ENCODE measurements at regions of chr10 and their contacts with region 1.

Region 1: GRCh38 chr10:99430451-99431189 is at the start of gene GOT1:
- DNase-seq: peak; percentile 96
- ATAC-seq: peak; percentile 95
- total RNA-seq, gene GOT1: 587 TPM

Region 2: DNA sequence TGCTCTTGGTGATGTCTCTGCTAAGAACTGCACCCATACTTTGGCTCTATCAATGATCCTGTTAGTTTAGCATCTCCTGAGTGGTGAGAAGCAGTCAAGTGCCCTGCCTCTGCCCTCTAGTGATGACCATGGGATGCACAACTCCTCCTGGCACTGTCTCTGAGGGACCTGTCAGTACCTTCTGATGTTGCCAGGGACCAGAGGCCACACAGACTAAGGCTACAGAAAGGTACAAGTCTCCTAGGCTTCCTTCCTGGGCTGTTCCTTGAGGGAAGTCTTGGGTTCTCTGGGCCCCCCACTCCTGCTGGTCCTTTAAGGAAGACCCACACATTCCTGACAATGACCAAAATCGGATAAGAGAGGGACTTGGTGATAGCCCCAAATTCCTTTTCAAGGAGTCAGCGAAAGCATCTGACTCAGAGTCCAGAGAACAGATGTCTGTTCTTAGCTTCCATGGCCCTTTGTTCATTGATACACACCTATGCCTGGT is 117.5 kb after region 1 on chr10:
- intact Hi-C with region 1: no loop called
- DNase-seq: no peak
- ATAC-seq: no peak

Region 3: GRCh38 chr10:99619851-99620712 is 189.5 kb after region 1 on chr10 and contains the start of gene SLC25A28:
- intact Hi-C with region 1: loop called (anchors 5 kb)
- DNase-seq: peak; percentile 94
- ATAC-seq: no peak
- total RNA-seq, gene SLC25A28: 43.1 TPM

Region 4: GRCh38 chr10:99667108-99667751 is 236.6 kb after region 1 on chr10:
- intact Hi-C with region 1: no loop called
- DNase-seq: no peak
- ATAC-seq: no peak

Region 5: DNA sequence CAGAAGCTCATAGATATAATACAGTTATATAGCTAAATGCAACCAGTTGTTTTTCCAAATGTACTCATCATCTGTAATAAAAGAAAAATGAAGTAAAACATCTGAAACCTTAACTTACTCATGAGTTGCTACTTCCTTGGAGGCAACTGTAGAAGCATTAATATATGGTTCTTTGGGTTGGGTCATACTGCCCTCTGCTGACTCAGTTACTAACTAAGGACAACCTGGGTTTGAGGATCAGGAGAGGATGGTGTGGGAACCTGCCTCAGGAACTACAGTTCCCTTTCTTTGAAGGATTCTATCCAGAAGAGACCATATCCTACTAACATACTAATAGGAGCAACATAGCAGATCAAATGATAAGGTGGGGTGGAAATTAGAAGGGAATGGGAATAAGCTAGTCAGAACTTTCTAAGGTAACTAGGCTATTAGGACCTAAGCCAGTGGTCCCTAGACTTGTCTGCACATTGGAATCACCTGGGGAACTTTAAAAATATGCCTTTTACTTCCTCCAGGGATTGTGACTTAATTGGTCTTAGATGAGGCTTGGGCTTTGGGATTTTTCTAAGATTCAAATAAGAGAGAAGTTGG is 280.6 kb after region 1 on chr10:
- intact Hi-C with region 1: loop called (anchors 10 kb)
- DNase-seq: no peak
- ATAC-seq: peak; percentile 71